Right lobe of liver (tissue), 6 donors: ENCODE measurements at regions of chr12 and their contacts with region 1.

Region 1: DNA sequence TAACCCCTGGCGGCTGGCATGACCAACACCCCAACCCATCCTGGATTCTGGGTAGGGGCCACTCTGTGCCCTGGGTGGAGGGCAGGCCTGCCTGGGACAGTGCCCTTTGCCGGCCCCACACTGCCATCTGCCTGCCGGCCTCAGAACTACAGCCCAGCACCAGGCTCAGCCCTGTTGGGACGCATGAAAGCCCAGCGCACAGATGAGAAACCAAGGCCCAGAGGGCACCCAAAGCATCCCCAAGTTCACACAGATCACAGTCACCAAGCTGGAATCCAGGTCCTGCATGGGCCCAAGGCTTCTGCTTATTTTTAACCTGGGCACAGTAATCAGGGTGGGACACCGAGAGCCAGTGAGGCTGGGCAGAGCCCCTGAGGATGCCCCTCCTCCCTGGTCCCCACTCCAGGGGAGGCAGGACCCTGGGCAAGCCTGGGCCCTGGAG is 26.2 kb downstream of the RFLNA start:
- DNase-seq: peak; percentile 65 to 72 (median 69)
- ATAC-seq: peak; percentile 85 to 93 (median 90)
- H3K4me3 ChIP-seq: no peak overlapping the region
- H3K27ac ChIP-seq: no peak overlapping the region
- H3K4me1 ChIP-seq: no peaks in the 10 kb centered on the region
- H3K27me3 ChIP-seq: no peaks in the 10 kb centered on the region
- CTCF ChIP-seq: peak; percentile 88 to 97 (median 91)
- POLR2A ChIP-seq: no peak

Region 2: GRCh38 chr12:123813349-123813748 is 507.7 kb before region 1 on chr12:
- intact Hi-C with region 1: no loop called
- DNase-seq: no peak
- ATAC-seq: no peak
- H3K4me3 ChIP-seq: no peak overlapping the region
- H3K27ac ChIP-seq: no peak overlapping the region
- H3K4me1 ChIP-seq: no peaks in the 10 kb centered on the region
- H3K27me3 ChIP-seq: no peaks in the 10 kb centered on the region
- CTCF ChIP-seq: no peak
- POLR2A ChIP-seq: no peak

Region 3: DNA sequence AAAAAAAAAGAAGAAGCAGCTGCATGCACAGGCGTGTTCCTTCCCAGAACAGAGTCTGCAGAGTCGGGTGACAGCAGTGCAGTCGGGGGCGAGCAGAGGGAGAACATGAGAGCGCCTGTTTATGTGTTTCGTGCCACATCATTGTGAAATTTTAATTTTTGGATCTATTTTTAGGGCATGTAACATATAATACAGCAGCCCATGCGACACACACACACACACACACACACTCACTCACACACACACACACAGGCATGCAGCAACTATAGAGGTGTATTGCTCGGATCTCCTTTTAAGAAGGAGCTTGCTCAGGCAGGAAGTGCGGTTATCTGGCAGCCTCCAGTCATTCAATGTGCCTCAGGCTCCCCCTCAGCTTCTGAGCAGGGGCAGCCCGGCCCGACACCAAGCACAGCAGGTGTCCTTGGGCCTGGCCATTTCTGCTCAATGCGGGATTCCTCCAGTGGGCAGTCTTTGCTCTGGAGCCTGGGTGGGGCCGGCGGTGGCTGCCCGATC is 276.2 kb before region 1 on chr12:
- intact Hi-C with region 1: loop called (anchors 5 kb)
- DNase-seq: no peak
- ATAC-seq: no peak
- H3K4me3 ChIP-seq: no peak overlapping the region
- H3K27ac ChIP-seq: no peak overlapping the region
- H3K4me1 ChIP-seq: no peaks in the 10 kb centered on the region
- H3K27me3 ChIP-seq: no peaks in the 10 kb centered on the region
- CTCF ChIP-seq: no peak
- POLR2A ChIP-seq: no peak

Region 4: DNA sequence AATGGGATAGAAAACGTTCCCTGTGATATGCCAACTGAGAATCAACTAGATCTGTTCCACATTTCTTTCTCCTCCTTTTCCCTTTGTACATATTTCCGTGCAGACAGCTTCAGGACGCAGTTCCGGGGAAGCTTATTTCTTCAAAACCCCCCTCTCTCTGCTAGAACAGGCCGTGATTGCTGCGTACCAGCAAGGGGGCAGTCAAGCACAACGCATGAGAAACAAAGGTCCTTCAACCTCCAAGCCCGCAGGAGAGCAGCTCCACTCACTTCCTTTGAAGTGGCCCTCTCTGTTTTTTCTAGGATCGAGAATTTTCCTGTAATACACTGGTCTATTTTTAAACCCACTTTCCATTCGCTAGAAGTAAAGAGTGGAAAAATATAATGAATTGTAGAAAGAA is 267.2 kb before region 1 on chr12:
- intact Hi-C with region 1: loop called in 1 of 2 experiments (anchors 5 kb)
- DNase-seq: no peak
- ATAC-seq: peak; percentile 61 to 90 (median 76)
- H3K4me3 ChIP-seq: no peak overlapping the region
- H3K27ac ChIP-seq: no peak overlapping the region
- H3K4me1 ChIP-seq: no peaks in the 10 kb centered on the region
- H3K27me3 ChIP-seq: no peaks in the 10 kb centered on the region
- CTCF ChIP-seq: peak; percentile 31 to 52 (median 40)
- POLR2A ChIP-seq: no peak

Region 5: DNA sequence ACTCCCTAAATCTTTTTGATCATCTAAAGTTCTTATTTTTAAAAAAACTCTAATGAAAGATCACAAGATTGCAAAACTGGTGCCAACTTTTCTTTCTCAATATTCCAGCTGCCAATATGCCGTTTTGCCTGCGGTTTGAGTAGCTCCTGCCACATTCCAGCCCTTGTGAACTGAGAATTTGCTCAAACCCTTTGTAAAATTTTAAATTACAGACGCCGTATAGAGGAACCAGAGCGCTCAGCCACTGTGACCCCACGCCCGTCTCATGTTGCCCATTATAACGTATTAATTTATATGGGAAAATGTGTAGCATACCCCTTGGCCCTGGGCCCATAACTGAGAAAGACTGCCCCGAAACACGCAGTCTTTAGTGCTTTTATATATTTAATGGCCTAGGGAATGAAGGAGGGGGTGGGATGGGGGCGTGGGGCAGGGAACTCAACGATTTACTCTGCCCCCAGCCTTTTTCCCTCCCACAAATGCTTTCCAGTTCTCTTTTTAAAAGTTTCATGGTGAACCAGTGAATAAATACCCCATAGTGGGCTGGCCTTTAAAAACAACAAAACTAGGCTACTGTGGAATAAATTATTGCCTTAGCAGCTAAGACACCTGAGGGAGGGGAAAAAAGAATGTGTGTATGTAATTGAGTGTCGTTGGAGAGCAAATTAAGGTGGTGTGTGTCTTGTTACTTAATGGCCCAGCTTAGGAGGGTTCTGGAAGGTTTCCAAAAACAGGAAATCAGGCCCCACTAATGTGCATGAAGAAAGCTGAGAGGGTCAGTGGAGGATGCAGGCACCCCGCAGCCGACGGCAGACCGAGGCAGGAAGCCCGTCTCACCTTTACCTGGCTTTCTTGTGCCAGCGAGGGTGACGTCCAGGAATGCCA is 71.9 kb before region 1 on chr12:
- intact Hi-C with region 1: no loop called
- DNase-seq: no peak
- ATAC-seq: no peak
- H3K4me3 ChIP-seq: no peak overlapping the region
- H3K27ac ChIP-seq: no peak overlapping the region
- H3K4me1 ChIP-seq: no peaks in the 10 kb centered on the region
- H3K27me3 ChIP-seq: no peaks in the 10 kb centered on the region
- CTCF ChIP-seq: no peak
- POLR2A ChIP-seq: no peak

Region 6: DNA sequence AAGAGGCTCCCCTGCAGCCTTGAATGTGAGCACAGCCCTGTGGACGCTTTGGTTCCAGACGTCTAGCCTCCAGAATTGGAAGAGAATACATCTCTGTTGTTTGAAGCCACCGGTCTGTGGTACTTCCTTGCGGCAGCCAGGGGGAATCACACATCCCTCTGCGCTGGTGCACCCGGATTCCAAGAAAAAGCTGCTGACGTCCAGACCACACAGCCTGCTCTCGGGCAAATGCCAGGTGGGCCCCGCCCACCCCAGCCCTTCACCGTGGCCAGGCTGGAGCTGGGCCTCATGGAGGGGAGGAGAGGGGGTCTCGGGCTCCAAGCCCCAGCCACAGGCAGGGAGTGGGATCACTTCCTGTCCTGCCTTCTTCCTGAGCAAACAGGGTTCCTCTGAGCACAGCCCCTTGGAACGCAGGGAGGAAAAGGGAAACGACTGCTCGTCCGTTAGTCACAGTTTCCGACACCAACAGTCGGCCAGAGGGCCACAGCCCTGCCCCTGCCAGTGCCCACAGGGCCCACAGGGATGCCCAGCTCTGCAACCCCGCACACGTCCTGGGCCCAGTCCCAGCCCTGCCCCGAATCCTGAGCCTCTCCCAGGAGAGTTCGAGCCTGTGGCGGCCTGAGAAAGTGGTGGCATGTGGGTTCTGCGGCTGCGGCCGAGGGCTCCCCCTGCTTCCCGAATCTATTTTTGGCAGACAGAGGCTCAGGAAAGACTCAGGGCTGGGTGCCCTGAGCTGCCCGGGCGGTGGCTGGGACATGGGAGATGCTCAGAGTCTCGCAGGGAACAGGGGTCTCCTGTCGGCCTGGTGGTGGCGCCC is 59.1 kb after region 1 on chr12:
- intact Hi-C with region 1: no loop called
- DNase-seq: peak in 1 of 3 donors; percentile 46
- ATAC-seq: peak; percentile 36 to 49 (median 43)
- H3K4me3 ChIP-seq: no peak overlapping the region
- H3K27ac ChIP-seq: peak overlapping the region; percentile 36 to 77 (median 48)
- H3K4me1 ChIP-seq: peaks cover 0 to 23% (median 14%) of the 10 kb centered on the region in 4 donors
- H3K27me3 ChIP-seq: no peaks in the 10 kb centered on the region
- CTCF ChIP-seq: peak; percentile 20 to 25 (median 21)
- POLR2A ChIP-seq: no peak